Breast epithelium (tissue), 4 donors: ENCODE measurements at regions of chr4 and their contacts with region 1.

Region 1: DNA sequence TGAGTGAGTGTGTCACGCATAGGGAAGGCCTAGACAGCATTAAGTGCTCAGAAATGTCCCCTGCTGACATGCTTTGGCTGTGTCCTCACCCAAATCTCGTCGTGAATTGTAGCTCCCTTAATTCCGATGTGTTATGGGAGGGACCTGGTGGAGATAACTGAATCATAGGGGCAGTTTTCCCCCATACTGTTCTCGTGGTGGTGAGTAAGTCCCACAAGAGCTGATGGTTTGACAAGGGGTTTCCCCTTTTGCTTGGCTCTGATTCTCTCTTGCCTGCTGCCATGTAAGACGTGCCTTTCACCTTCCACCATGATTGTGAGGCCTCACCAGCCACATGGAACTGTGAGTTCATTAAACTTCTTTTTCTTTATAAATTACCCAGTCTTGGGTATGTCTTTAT is 78.0 kb downstream of the NSUN7 start:
- DNase-seq: no peak
- H3K4me3 ChIP-seq: no peak overlapping the region
- H3K27ac ChIP-seq: no peak overlapping the region
- H3K4me1 ChIP-seq: no peaks in the 10 kb centered on the region
- H3K27me3 ChIP-seq: no peaks in the 10 kb centered on the region
- CTCF ChIP-seq: no peak
- POLR2A ChIP-seq: no peak

Region 2: DNA sequence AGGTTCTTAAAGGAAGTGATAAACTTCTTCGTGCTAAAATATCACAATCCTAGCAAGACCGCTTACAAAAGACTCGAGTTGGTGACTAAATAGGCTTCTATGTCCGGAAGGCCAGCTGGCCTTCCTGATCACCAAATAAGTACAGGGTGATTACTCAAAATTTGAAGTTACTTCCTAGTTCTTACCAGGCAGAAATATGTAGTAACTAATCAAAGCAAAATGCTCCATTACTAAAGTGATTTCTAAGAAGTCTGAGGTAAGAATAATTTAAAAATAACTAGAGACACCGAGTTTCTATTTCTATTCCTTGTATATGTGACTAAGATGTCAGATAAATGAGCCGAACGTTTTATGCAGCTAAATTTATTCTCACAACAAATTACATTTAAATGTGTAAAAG is 15.8 kb before region 1 on chr4:
- intact Hi-C with region 1: loop called (anchors 1 kb)
- DNase-seq: no peak
- H3K4me3 ChIP-seq: no peak overlapping the region
- H3K27ac ChIP-seq: no peak overlapping the region
- H3K4me1 ChIP-seq: no peaks in the 10 kb centered on the region
- H3K27me3 ChIP-seq: no peaks in the 10 kb centered on the region
- CTCF ChIP-seq: no peak
- POLR2A ChIP-seq: no peak

Region 3: DNA sequence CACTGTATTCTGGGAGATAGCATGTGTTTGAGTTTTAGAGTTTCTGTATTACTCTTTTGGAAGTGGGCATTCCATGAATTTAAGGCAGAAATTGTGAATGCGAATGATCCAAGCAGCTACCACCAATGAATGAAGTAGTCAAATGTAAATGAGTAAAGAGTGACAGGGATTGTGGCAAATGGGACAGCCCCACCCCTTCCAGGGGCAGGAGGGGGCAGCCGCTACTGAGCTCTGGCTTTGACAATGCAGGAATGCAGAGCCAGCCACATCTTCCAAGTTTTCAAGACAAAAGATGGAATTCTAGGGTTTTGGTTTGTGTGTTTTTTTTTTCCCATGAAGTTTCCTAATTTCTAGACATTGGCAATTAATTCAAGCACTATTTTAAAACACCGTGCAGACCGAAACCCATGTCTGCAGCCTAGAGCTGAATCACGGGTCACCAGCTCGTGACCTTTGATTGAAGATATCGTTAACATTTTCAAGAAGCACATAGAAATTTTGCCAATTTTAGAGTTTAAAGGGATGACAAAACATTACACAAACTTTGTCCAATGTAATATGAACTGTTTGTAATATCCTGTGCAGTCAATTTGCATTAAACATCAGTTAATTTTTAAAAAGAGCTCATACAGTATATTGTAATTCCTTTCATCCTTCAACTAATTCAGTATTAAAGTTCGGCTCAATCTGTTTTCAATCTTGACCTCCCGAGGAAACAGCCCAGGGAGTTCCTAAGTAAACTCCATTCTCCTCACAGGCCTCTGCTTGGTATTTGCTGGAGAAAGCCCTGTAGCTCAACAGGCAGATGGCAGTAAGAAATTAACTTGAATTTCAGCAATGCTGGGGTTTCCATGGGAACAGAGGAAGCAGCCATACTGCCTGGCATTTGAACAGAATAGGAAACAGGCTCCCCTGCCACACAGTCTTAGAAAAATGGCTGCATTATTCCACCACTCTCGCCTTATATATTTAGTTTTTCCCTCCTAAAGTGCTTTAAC is 512.4 kb after region 1 on chr4:
- intact Hi-C with region 1: no loop called
- DNase-seq: no peak
- H3K4me3 ChIP-seq: no peak overlapping the region
- H3K27ac ChIP-seq: no peak overlapping the region
- H3K4me1 ChIP-seq: no peaks in the 10 kb centered on the region
- H3K27me3 ChIP-seq: no peaks in the 10 kb centered on the region
- CTCF ChIP-seq: no peak
- POLR2A ChIP-seq: no peak